A673 (cell line): ENCODE measurements at regions of chr2 and their contacts with region 1.

Region 1: GRCh38 chr2:7191932-7192331 is 274.7 kb downstream of the RNF144A start:
- DNase-seq: peak; percentile 96
- H3K4me3 ChIP-seq: no peak overlapping the region
- H3K27ac ChIP-seq: peak overlapping the region; percentile 93
- H3K4me1 ChIP-seq: peaks cover 82% of the 10 kb centered on the region
- H3K27me3 ChIP-seq: no peaks in the 10 kb centered on the region
- CTCF ChIP-seq: no peak

Region 2: DNA sequence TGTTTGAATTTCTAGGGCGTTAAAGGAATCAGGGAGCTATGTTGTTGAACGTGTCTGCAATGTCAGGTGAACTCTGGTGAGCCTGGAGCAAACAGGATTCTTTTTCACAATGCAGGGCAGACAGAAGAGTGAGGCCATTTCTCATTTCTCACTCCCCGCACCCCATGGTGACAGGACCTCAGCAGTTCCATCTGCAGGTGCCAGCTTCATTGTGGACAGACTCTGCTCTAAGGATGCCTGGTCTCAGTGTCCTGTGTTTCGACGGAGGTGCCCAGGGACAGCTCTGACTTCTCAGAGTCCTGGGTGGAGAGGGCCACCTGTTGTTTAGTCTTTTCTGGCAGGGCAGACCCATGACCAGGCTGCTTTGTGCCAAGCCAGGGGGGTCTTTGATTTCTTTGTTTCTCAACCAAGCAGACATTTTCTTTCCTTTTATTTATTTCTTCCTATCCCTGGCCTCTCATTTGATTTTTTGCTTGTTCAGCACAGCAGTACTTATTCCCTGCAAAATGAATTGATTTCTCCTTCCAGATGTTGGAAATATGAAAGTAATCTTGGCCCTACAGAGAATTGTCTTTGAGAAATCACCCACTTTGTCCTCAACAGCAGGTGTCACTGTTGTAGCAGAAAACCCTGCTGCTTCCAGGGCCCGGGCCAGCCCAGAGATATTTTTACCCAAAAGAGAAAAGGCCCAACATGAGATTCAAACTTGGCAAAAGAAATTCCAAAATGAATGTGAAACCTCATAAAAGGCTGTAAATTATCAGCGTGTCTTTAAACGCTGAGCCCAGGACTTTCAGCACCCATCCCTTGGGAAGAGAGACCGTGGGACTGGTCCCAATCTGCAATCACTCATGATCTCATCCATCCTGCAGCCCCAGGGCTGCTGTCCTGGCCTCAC is 73.1 kb before region 1 on chr2:
- CTCF ChIA-PET with region 1: interaction called, 3 read pairs
- POLR2A ChIA-PET with region 1: no interaction called
- intact Hi-C with region 1: loop called (anchors 2 kb)
- DNase-seq: peak; percentile 83
- H3K4me3 ChIP-seq: no peak overlapping the region
- H3K27ac ChIP-seq: peak overlapping the region; percentile 72
- H3K4me1 ChIP-seq: peaks cover 19% of the 10 kb centered on the region
- H3K27me3 ChIP-seq: no peaks in the 10 kb centered on the region
- CTCF ChIP-seq: peak; percentile 84